ENCODE measurements at regions of chr19 and their contacts with region 1.

Region 1: DNA sequence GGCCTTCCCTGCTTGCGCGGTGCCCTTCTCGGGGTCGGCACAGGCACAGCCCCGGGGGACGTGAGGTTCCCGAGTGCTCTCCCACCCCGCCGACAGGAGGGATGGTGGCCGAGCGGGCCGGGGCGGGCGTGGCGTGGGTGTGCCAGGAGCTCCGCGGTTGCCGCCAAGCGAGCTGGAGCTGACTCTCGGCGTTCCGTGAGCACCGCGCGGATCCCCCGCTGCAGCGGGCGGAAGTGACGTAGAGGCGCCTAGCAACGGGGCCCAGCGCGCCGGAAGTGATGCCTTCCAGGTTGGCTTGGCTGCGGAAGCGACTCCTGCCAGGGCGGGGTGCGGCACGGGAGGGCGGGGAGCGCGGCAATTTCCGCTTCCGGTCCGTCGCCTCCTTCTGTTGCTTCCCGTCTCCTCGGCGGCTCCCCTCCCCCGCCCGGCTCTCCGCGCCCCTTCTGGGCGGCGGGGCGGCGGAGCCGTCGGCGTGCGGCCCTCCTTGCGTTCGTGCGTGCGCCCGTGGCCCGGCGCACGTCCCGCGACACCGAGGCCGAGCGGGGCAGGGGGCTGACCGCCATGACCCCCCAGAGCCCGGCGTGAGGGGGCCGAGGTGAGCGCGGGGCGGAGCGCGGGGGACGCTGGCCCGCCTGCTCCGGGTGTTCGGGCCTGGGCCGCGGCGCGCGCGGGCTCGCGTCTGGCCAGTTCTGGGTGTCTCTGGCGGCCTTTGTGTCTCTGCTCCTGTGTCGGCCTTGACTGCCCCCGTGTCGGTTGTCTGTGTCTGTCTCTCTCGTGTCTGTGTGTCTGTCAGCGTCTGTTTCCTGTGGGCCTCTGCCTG is at the start of gene EPN1:
- DNase-seq: peak; percentile 98
- H3K4me3 ChIP-seq: peak within 1 kb of the TSS; percentile 95
- H3K27ac ChIP-seq: peak within 1 kb of the TSS; percentile 97
- H3K4me1 ChIP-seq: peaks cover 52% of the 10 kb centered on the region
- CTCF ChIP-seq: no peak
- total RNA-seq, gene EPN1: 40.5 and 46.3 TPM in 2 replicates

Region 2: GRCh38 chr19:55653758-55654539 is 21.1 kb before region 1 on chr19:
- CTCF ChIA-PET with region 1: no interaction called
- POLR2A ChIA-PET with region 1: interaction called, 6 read pairs
- intact Hi-C with region 1: loop called (anchors 2 kb)
- DNase-seq: peak; percentile 100
- H3K4me3 ChIP-seq: peak overlapping the region; percentile 87
- H3K27ac ChIP-seq: peak overlapping the region; percentile 90
- H3K4me1 ChIP-seq: peaks cover 29% of the 10 kb centered on the region
- CTCF ChIP-seq: peak; percentile 96

Region 3: GRCh38 chr19:55809381-55810058 is 134.5 kb after region 1 on chr19:
- CTCF ChIA-PET with region 1: no interaction called
- POLR2A ChIA-PET with region 1: no interaction called
- intact Hi-C with region 1: loop called (anchors 5 kb)
- DNase-seq: peak; percentile 89
- H3K4me3 ChIP-seq: peak overlapping the region; percentile 66
- H3K27ac ChIP-seq: peak overlapping the region; percentile 30
- H3K4me1 ChIP-seq: peaks cover 60% of the 10 kb centered on the region
- CTCF ChIP-seq: peak; percentile 85

Region 4: GRCh38 chr19:55830656-55831055 is 155.6 kb after region 1 on chr19:
- CTCF ChIA-PET with region 1: no interaction called
- POLR2A ChIA-PET with region 1: no interaction called
- intact Hi-C with region 1: loop called (anchors 5 kb)
- DNase-seq: peak; percentile 97
- H3K4me3 ChIP-seq: peak overlapping the region; percentile 93
- H3K27ac ChIP-seq: peak overlapping the region; percentile 89
- H3K4me1 ChIP-seq: peaks cover 39% of the 10 kb centered on the region
- CTCF ChIP-seq: no peak

Measured in OCI-LY7 (cell line).